Panc1 (cell line): ENCODE measurements at regions of chr6 and their contacts with region 1.

Region 1: GRCh38 chr6:70700922-70701876 is 33.5 kb downstream of the SMAP1 start:
- DNase-seq: no peak
- ATAC-seq: peak; percentile 42; the same call in 1 of the 2 replicates
- H3K4me3 ChIP-seq: no peak overlapping the region
- H3K27ac ChIP-seq: no peak overlapping the region
- H3K4me1 ChIP-seq: no peaks in the 10 kb centered on the region
- H3K27me3 ChIP-seq: no peaks in the 10 kb centered on the region
- CTCF ChIP-seq: no peak

Region 2: GRCh38 chr6:70566751-70567382 is 134.3 kb before region 1 on chr6 and contains the start of gene SDHAF4:
- CTCF ChIA-PET with region 1: no interaction called
- POLR2A ChIA-PET with region 1: interaction called, 12 read pairs
- in situ Hi-C with region 1: no loop called
- intact Hi-C with region 1: no loop called
- DNase-seq: peak; percentile 50
- ATAC-seq: peak; percentile 100
- H3K4me3 ChIP-seq: peak within 1 kb of the TSS; percentile 73 to 74
- H3K27ac ChIP-seq: peak within 1 kb of the TSS; percentile 88
- H3K4me1 ChIP-seq: peaks cover 12% of the 10 kb centered on the region; the same call in 1 of the 2 replicates
- H3K27me3 ChIP-seq: no peaks in the 10 kb centered on the region
- CTCF ChIP-seq: no peak
- total RNA-seq, gene SDHAF4: 14.4 TPM

Region 3: DNA sequence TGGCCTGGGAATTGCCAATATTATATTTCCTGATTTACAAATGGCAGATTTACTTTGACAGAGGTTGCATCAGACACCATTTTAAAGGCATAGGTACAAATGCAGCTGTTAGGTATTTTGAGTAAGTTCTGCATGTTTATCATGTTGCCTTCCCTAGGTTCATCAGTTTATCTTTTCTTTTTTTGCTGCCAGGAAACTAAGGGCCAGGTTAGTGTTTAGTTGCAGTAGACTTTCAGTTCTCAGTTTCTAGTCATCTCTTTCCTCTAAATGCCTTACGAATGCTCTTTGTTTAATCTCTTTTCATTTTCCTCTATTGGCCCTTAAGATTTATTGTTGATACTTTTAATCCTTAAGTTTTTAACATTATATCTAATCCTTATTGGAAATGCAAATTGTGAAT is 96.4 kb after region 1 on chr6:
- CTCF ChIA-PET with region 1: no interaction called
- POLR2A ChIA-PET with region 1: no interaction called
- in situ Hi-C with region 1: no loop called
- intact Hi-C with region 1: no loop called
- DNase-seq: no peak
- ATAC-seq: no peak
- H3K4me3 ChIP-seq: no peak overlapping the region
- H3K27ac ChIP-seq: no peak overlapping the region
- H3K4me1 ChIP-seq: no peaks in the 10 kb centered on the region
- H3K27me3 ChIP-seq: no peaks in the 10 kb centered on the region
- CTCF ChIP-seq: no peak